GM10248 (cell line): ENCODE measurements at regions of chr9 and their contacts with region 1.

Region 1: DNA sequence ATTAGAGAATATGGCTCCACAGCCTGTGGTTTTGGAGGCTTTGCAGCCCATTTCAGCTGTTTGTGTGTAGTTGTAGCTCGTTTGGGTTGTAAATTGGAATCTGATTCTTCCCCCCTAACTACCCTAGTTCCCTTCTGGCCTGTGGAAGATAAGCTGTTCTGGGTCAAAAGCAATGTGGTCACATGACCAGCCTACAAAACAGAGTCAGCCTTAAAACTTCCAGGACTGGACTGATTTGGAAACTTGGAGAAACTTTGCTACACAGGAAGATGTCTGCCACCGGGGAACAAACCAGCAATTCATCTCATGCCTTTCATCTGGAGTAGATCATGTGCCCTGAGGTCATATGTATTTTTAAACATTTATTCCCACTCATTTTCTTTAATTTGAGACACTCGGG is 83.8 kb downstream of the DAPK1 start:
- DNase-seq: no peak
- CTCF ChIP-seq: no peak

Region 2: DNA sequence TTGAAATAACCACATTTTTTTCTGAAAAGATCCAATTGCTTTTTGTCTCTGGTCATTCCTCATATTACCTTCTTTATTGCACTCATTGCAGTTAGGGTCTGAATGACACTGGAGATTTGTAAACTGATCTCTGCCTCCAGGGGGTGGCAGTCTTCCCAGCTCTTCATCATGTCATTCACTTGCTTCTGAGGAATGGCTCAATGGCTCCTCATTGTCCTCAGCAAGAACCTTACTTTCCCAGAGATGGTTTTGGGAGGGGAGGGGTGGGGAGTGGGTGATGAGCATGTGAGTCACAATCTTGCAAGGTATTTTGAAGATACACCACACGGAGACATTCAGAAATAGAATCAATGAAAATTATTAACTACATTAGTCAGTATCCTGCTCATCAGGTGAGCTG is 474.4 kb before region 1 on chr9:
- CTCF ChIA-PET with region 1: no interaction called
- POLR2A ChIA-PET with region 1: no interaction called
- DNase-seq: no peak
- CTCF ChIP-seq: no peak

Region 3: DNA sequence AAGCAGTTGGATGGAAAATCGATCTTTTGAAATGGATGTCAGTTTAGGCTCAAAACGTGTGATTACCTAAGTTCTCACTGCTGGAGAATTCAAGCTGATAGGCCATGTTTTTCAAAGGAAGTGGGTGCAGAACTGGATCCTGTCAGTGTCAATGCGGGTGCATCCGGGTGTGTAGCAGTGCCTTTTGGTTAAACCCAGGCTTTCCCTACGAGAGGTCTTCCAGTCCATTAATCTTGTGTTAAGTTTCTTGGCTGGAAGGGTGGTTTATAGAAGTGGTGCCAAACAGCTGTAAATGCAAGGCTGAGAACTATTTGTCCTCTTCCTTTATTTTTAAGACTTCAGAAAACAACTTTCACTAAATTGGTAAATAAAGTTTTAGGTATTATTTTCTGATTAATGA is 12.0 kb before region 1 on chr9:
- CTCF ChIA-PET with region 1: interaction called, 37 read pairs
- POLR2A ChIA-PET with region 1: no interaction called
- DNase-seq: no peak
- CTCF ChIP-seq: no peak

Region 4: GRCh38 chr9:87592554-87593358 is 11.2 kb after region 1 on chr9:
- CTCF ChIA-PET with region 1: interaction called, 11 read pairs
- POLR2A ChIA-PET with region 1: no interaction called
- DNase-seq: no peak
- CTCF ChIP-seq: no peak

Region 5: DNA sequence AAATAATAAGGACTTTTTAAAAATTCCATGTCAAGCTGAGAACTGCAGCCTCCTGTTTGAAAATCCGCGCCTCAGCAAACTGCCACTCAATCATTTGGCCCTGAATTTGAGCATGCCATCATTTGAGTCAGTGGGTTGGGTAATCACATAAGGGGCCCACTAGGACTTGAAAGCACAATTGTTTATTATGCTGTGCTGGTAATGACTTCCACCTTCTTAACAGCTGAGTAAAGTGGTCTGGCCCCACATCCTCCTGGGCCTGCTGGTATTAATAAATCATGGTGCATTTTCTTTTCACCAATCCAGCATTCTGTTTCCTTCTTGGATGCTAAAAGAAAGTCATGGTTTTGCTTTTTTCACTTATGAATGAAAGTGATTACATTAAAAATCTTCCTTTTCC is 41.4 kb after region 1 on chr9:
- CTCF ChIA-PET with region 1: no interaction called
- POLR2A ChIA-PET with region 1: no interaction called
- DNase-seq: no peak
- CTCF ChIP-seq: no peak